ENCODE measurements at regions of chr18 and their contacts with region 1.

Region 1: GRCh38 chr18:79378542-79379250 is 17.0 kb upstream of the NFATC1 start:
- DNase-seq: no peak
- H3K4me3 ChIP-seq: no peak overlapping the region
- CTCF ChIP-seq: peak; percentile 99

Region 2: DNA sequence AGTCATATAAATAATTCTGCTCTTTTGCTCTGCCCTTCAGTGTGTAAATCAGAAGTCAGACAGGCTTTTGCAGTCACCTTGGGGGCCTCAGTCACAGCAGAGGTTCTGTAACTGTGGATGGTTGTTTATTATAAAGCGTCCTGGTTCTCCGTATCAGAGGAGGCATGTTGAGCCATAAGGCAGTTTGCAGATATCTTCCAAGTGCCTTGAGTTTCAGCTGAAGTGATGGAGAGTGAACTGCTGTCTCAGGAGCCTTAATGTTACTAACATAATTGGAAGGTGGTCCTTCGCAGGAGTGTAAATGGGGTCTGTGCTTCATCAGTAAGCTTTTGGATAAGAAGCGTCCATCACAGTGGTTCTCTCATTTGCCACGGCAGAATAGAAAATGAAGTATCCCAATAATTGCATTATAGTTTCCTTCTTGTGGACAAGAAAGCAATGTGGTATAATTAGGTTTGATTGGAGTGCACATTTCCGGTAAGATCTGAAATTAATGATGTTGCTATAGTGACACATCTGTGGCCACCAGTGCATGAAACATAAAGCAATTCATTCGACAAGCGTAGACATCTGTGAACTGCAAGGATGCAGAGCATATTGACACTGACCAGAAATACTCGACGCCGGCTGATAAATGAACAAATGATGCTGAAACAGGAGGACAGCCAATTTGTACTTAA is 95.4 kb before region 1 on chr18:
- CTCF ChIA-PET with region 1: no interaction called
- POLR2A ChIA-PET with region 1: no interaction called
- DNase-seq: no peak
- H3K4me3 ChIP-seq: no peak overlapping the region
- CTCF ChIP-seq: no peak

Region 3: DNA sequence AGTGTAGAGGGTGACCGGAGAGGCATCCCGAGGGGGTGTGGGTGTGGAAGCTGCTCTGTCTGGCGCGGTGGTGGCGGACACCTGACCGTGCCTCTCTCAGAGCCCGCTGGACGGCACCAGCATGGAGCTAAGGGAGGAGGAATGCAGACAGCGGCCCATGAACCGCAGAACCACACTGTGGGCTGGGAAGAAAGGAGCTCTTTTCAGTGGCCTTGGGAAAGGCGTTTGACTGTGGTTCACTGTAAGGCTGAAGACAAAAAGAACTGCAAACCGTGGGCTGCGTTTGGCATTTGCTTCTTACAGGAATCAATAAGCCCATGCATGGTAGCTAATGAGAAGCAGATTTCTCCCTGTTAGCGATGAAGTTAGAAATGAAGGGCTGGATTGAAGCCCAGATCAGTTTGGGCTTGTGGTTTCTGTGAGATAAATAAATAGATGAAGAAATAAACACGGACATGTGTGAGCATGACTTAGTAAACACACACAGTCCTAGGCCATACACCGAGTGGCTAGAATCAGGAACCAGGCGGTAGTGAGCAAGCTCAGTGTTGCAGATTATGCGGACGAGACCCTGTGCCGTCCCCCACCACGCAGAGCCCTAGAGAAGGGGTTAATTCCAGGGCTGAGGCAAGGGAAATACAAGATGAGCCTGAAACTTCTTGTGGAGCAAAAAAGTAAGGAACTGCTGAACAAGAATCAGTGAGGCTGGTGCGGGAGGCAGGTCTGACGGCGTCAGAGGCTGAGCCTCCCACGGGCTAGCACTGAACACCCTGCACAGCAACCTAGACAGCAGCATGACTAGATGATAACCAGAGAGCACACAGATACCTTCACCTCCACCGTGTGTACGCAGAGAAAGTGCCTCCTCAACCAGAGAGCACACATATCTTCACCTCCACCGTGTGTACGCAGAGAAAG is 12.3 kb before region 1 on chr18:
- CTCF ChIA-PET with region 1: interaction called, 48 read pairs
- POLR2A ChIA-PET with region 1: no interaction called
- DNase-seq: peak; percentile 74
- H3K4me3 ChIP-seq: no peak overlapping the region
- CTCF ChIP-seq: no peak

Region 4: DNA sequence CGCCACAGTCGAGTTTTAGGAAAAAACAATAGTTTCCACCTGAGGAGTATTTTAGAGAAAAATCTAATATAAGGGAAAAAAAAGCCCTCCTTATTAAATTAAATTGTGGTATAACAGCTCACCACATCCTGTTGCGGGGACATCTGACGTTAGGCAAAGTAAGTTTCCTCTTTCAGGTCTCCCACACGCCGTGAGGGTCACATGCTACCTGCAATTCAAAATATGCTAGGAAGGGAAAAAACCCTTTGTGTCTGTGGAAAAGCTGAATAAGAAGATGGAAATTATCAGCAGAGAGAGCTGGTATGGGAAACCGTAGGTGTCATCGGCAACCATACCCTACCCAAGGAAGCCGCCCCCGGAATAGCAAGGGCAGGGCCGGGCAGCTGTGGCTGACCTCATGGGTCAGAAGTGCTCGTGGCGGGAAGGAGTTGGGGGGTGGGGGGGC is 145.1 kb after region 1 on chr18:
- CTCF ChIA-PET with region 1: interaction called, 294 read pairs
- POLR2A ChIA-PET with region 1: no interaction called
- DNase-seq: no peak
- H3K4me3 ChIP-seq: no peak overlapping the region
- CTCF ChIP-seq: no peak

Region 5: DNA sequence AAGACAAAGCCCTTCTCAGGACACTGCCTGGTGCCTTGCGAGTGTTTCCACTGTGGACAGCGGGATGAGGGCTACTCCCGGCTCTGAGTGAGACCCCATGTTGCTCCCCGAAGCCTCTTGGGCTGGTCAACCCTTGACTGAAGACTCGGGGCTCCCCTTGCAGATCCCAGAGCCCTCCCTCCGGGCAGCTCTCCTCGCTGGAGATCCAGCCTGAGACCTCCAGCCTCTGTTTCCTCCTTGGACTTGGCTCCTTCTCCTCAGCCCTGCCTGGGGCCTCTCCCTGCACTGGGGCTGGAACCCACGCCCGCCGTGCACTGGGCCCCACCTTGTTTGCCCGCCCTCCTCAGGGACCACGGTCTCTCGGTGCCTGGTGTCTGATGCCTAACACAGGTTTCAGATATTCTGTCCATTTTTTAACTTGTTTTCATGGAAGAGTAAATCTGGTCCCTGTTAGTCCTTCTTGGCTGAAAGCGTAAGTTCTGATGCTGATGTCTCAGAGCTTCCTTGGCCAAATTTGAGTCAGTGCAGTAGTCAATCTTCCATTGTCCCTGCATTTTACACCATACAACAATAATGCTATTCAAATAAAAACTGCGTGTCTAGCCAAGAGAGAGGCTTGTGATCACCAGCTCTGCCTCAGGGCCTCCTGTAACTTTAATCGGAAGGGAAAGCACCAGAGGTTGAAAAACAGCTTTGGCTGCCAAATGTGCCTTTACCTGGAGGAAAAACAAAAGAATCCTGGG is 161.6 kb after region 1 on chr18:
- CTCF ChIA-PET with region 1: interaction called, 26 read pairs
- POLR2A ChIA-PET with region 1: no interaction called
- DNase-seq: no peak
- H3K4me3 ChIP-seq: no peak overlapping the region
- CTCF ChIP-seq: no peak

Region 6: GRCh38 chr18:79634593-79635426 is 256.1 kb after region 1 on chr18:
- CTCF ChIA-PET with region 1: interaction called, 51 read pairs
- POLR2A ChIA-PET with region 1: no interaction called
- DNase-seq: no peak
- H3K4me3 ChIP-seq: no peak overlapping the region
- CTCF ChIP-seq: no peak

Region 7: GRCh38 chr18:79650959-79651358 is 272.3 kb after region 1 on chr18:
- CTCF ChIA-PET with region 1: interaction called, 200 read pairs
- POLR2A ChIA-PET with region 1: no interaction called
- DNase-seq: no peak
- H3K4me3 ChIP-seq: no peak overlapping the region
- CTCF ChIP-seq: no peak

Measured in AG04449 (cell line).